IMR-90 (cell line): ENCODE measurements at regions of chr15 and their contacts with region 1.

Region 1: GRCh38 chr15:49255966-49256759 is 86.1 kb downstream of the GALK2 start:
- DNase-seq: peak; percentile 78
- ATAC-seq: peak; percentile 91
- H3K4me3 ChIP-seq: no peak overlapping the region
- H3K27ac ChIP-seq: peak overlapping the region; percentile 60; the same call in 1 of the 2 replicates
- H3K4me1 ChIP-seq: peaks cover 3% of the 10 kb centered on the region
- H3K27me3 ChIP-seq: no peaks in the 10 kb centered on the region
- CTCF ChIP-seq: no peak
- POLR2A ChIP-seq: no peak
- RAD21 ChIP-seq: no peak

Region 2: DNA sequence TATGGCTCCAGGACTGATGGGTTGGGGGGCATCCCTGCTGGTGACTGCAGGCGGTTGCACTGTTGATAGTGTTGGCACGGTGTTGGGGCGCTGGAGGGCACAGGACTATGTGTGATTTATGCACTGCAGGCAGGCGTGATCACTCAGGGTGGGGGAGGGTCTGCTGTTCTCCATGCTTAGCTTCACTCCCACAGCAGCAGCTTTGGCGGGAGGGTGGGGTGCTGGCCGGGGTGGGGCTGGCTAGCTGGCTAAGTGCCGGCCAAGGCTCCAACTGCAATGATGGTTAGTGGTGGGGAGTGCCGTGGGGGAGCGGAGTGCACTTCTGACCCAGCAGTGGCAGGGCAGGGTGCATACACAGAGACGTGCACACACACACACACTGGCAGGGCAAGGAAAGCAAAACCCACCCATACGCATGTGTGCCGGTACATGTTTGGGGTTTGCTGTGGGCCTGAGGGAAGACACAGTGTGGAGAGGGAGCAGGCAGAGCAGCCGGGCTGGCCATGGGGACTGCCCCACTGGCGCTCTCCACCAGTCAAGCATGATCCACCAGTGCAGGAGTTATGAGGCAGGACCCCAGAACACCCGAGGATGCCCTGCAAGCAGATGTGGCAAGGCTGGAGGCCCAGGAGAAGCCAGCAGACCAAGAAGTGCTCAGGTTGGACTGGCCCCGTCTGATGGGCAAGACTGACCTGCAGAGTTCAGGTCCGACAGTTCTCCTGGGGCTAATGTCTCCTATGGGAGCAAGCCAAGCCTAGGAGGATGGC is 150.4 kb after region 1 on chr15:
- CTCF ChIA-PET with region 1: no interaction called
- POLR2A ChIA-PET with region 1: no interaction called
- dilution Hi-C with region 1: no loop called
- in situ Hi-C with region 1: loop called (anchors 10 kb)
- intact Hi-C with region 1: no loop called
- DNase-seq: no peak
- ATAC-seq: no peak
- H3K4me3 ChIP-seq: no peak overlapping the region
- H3K27ac ChIP-seq: no peak overlapping the region
- H3K4me1 ChIP-seq: no peaks in the 10 kb centered on the region
- H3K27me3 ChIP-seq: no peaks in the 10 kb centered on the region
- CTCF ChIP-seq: no peak
- POLR2A ChIP-seq: no peak
- RAD21 ChIP-seq: no peak

Region 3: GRCh38 chr15:49810720-49811119 is 554.6 kb after region 1 on chr15:
- CTCF ChIA-PET with region 1: no interaction called
- POLR2A ChIA-PET with region 1: no interaction called
- dilution Hi-C with region 1: no loop called
- in situ Hi-C with region 1: no loop called
- intact Hi-C with region 1: no loop called
- DNase-seq: no peak
- ATAC-seq: no peak
- H3K4me3 ChIP-seq: no peak overlapping the region
- H3K27ac ChIP-seq: no peak overlapping the region
- H3K4me1 ChIP-seq: peaks cover 6% of the 10 kb centered on the region; the same call in 1 of the 2 replicates
- H3K27me3 ChIP-seq: no peaks in the 10 kb centered on the region
- CTCF ChIP-seq: no peak
- POLR2A ChIP-seq: no peak
- RAD21 ChIP-seq: no peak